PC-3 (cell line): ENCODE measurements at regions of chr6 and their contacts with region 1.

Region 1: DNA sequence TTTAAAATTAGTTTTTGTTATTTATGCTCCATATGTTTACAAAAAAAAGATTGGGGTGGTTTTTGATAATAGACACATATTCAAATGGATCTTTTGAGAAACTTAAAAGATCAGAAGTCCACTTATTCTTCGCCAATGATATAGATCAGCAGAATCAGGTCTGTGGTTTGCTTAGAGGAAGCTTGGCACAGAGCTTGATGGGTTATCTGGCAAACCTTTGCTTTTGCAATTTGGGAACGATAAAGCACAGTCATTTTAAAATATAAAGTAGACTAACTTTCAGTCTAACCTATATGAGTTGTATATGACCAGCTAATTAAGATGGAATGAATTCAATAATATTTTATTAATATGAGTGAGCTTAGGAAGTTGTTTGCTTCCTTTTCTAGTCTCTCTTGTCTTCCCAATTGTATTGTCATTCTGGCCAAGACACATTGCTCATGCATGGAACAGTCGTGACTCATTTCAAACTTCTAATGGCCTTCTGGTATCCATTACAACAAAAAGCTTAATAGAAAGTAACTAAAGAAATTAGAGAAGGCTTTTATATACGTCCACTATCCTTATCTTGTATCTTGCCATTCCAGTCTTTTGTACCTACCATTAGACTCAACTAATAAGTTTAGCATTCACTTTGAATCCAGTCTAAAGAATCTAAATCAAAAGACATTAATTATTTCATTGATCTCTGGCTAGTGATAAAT is 118.7 kb downstream of the TBX18 start:
- DNase-seq: peak; percentile 84
- ATAC-seq: peak; percentile 60
- H3K4me3 ChIP-seq: peak overlapping the region; percentile 41
- H3K27ac ChIP-seq: peak overlapping the region; percentile 92
- H3K4me1 ChIP-seq: peaks cover 36% of the 10 kb centered on the region
- H3K27me3 ChIP-seq: no peaks in the 10 kb centered on the region
- CTCF ChIP-seq: no peak

Region 2: GRCh38 chr6:84623956-84624680 is 21.6 kb before region 1 on chr6:
- CTCF ChIA-PET with region 1: no interaction called
- POLR2A ChIA-PET with region 1: no interaction called
- intact Hi-C with region 1: loop called (anchors 1 kb)
- DNase-seq: peak; percentile 77
- ATAC-seq: peak; percentile 52
- H3K4me3 ChIP-seq: peak overlapping the region; percentile 84; the same call in 1 of the 2 replicates
- H3K27ac ChIP-seq: peak overlapping the region; percentile 42
- H3K4me1 ChIP-seq: peaks cover 25% of the 10 kb centered on the region
- H3K27me3 ChIP-seq: no peaks in the 10 kb centered on the region
- CTCF ChIP-seq: no peak

Region 3: GRCh38 chr6:84764332-84765049 is 118.8 kb after region 1 on chr6 and contains the start of gene TBX18:
- CTCF ChIA-PET with region 1: no interaction called
- POLR2A ChIA-PET with region 1: no interaction called
- intact Hi-C with region 1: no loop called
- DNase-seq: no peak
- ATAC-seq: no peak
- H3K4me3 ChIP-seq: no peak within 1 kb of the TSS
- H3K27ac ChIP-seq: no peak within 1 kb of the TSS
- H3K4me1 ChIP-seq: no peaks in the 10 kb centered on the region
- H3K27me3 ChIP-seq: peaks cover 77% of the 10 kb centered on the region
- CTCF ChIP-seq: no peak
- total RNA-seq, gene TBX18: not detected in 2 replicates